ENCODE measurements at regions of chr3 and their contacts with region 1.

Region 1: GRCh38 chr3:129120254-129121004 is 1.2 kb downstream of the RAB43 start:
- DNase-seq: peak; percentile 79 to 97 (median 92)
- ATAC-seq: peak; percentile 51
- H3K4me3 ChIP-seq: peak overlapping the region; percentile 85 to 93
- H3K4me3 Mint-ChIP-seq: peak overlapping the region; percentile 94
- H3K27ac ChIP-seq: peak overlapping the region; percentile 74
- H3K27ac Mint-ChIP-seq: peak overlapping the region; percentile 99
- H3K4me1 ChIP-seq: peaks cover 33% of the 10 kb centered on the region
- H3K4me1 Mint-ChIP-seq: peaks cover 59% of the 10 kb centered on the region
- H3K27me3 ChIP-seq: no peaks in the 10 kb centered on the region
- H3K27me3 Mint-ChIP-seq: no peaks in the 10 kb centered on the region
- CTCF ChIP-seq: peak; percentile 26

Region 2: GRCh38 chr3:129016356-129016719 is 104.1 kb before region 1 on chr3:
- CTCF ChIA-PET with region 1: interaction called, 17 read pairs
- POLR2A ChIA-PET with region 1: interaction called, 55 read pairs
- intact Hi-C with region 1: loop called in 1 of 2 experiments (anchors 1 kb)
- DNase-seq: peak in 8 of 9 experiments; percentile 48 to 91 (median 74)
- ATAC-seq: peak; percentile 86
- H3K4me3 ChIP-seq: peak overlapping the region; percentile 40 to 41
- H3K4me3 Mint-ChIP-seq: peak overlapping the region; percentile 73
- H3K27ac ChIP-seq: peak overlapping the region; percentile 49 to 87
- H3K27ac Mint-ChIP-seq: peak overlapping the region; percentile 92
- H3K4me1 ChIP-seq: peaks cover 41% of the 10 kb centered on the region
- H3K4me1 Mint-ChIP-seq: peaks cover 44% of the 10 kb centered on the region
- H3K27me3 ChIP-seq: no peaks in the 10 kb centered on the region
- H3K27me3 Mint-ChIP-seq: no peaks in the 10 kb centered on the region
- CTCF ChIP-seq: peak; percentile 38

Region 3: DNA sequence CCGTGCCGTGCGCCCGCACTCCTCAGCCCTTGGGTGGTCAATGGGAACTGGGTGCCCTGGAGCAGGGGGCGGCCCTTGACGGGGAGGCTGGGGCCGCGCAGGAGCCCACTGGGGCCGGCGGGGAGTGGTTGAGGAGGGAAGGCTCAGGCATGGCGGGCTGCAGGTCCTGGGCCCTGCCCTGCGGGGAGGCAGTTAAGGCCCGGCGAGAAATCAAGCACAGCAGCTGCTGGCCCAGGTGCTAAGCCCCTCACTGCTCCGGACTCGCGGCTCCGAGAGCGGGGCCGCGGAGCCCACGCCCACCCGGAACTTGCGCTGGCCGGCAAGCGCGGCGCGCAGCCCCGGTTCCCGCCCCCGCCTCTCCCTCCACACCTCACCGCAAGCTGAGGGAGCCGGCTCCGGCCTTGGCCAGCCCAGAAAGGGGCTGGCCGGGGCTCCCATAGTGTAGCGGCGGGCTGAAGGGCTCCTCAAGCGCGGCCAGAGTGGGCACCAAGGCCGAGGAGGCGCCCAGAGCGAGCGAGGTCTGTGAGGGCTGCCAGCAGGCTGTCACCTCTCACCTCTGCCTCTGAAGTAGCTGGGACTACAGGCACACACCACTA is 52.0 kb before region 1 on chr3:
- CTCF ChIA-PET with region 1: interaction called, 4 read pairs
- POLR2A ChIA-PET with region 1: interaction called, 6 read pairs
- intact Hi-C with region 1: loop called in 1 of 2 experiments (anchors 1 kb)
- DNase-seq: peak in 3 of 9 experiments; percentile 25 to 55 (median 38)
- ATAC-seq: peak; percentile 53
- H3K4me3 ChIP-seq: peak overlapping the region; percentile 33 to 37
- H3K4me3 Mint-ChIP-seq: peak overlapping the region; percentile 82
- H3K27ac ChIP-seq: no peak overlapping the region
- H3K27ac Mint-ChIP-seq: no peak overlapping the region
- H3K4me1 ChIP-seq: no peaks in the 10 kb centered on the region
- H3K4me1 Mint-ChIP-seq: peaks cover 28% of the 10 kb centered on the region
- H3K27me3 ChIP-seq: no peaks in the 10 kb centered on the region
- H3K27me3 Mint-ChIP-seq: peaks cover 3% of the 10 kb centered on the region
- CTCF ChIP-seq: no peak

Region 4: GRCh38 chr3:129132097-129132866 is 11.9 kb after region 1 on chr3:
- CTCF ChIA-PET with region 1: interaction called, 3 read pairs
- POLR2A ChIA-PET with region 1: interaction called, 28 read pairs
- intact Hi-C with region 1: no loop called
- DNase-seq: no peak
- ATAC-seq: peak; percentile 62
- H3K4me3 ChIP-seq: no peak overlapping the region
- H3K4me3 Mint-ChIP-seq: no peak overlapping the region
- H3K27ac ChIP-seq: peak overlapping the region; percentile 17 to 33
- H3K27ac Mint-ChIP-seq: peak overlapping the region; percentile 81
- H3K4me1 ChIP-seq: peaks cover 16% of the 10 kb centered on the region
- H3K4me1 Mint-ChIP-seq: peaks cover 16% of the 10 kb centered on the region
- H3K27me3 ChIP-seq: no peaks in the 10 kb centered on the region
- H3K27me3 Mint-ChIP-seq: no peaks in the 10 kb centered on the region
- CTCF ChIP-seq: no peak

Region 5: GRCh38 chr3:129249276-129250065 is 129.0 kb after region 1 on chr3 and contains the start of gene COPG1:
- CTCF ChIA-PET with region 1: interaction called, 7 read pairs
- POLR2A ChIA-PET with region 1: interaction called, 16 read pairs
- intact Hi-C with region 1: loop called (anchors 5 kb)
- DNase-seq: peak; percentile 72 to 95 (median 85)
- ATAC-seq: peak; percentile 83
- H3K4me3 ChIP-seq: peak within 1 kb of the TSS; percentile 80 to 87
- H3K4me3 Mint-ChIP-seq: peak within 1 kb of the TSS; percentile 96
- H3K27ac ChIP-seq: peak within 1 kb of the TSS; percentile 83 to 89
- H3K27ac Mint-ChIP-seq: peak within 1 kb of the TSS; percentile 96
- H3K4me1 ChIP-seq: peaks cover 31% of the 10 kb centered on the region
- H3K4me1 Mint-ChIP-seq: peaks cover 49% of the 10 kb centered on the region
- H3K27me3 ChIP-seq: no peaks in the 10 kb centered on the region
- H3K27me3 Mint-ChIP-seq: no peaks in the 10 kb centered on the region
- CTCF ChIP-seq: no peak
- total RNA-seq, gene COPG1: 77.0 to 93.5 TPM

Region 6: GRCh38 chr3:129289201-129289921 is 168.9 kb after region 1 on chr3:
- CTCF ChIA-PET with region 1: no interaction called
- POLR2A ChIA-PET with region 1: no interaction called
- intact Hi-C with region 1: no loop called
- DNase-seq: no peak
- ATAC-seq: no peak
- H3K4me3 ChIP-seq: no peak overlapping the region
- H3K4me3 Mint-ChIP-seq: no peak overlapping the region
- H3K27ac ChIP-seq: no peak overlapping the region
- H3K27ac Mint-ChIP-seq: peak overlapping the region; percentile 45
- H3K4me1 ChIP-seq: no peaks in the 10 kb centered on the region
- H3K4me1 Mint-ChIP-seq: peaks cover 21% of the 10 kb centered on the region
- H3K27me3 ChIP-seq: no peaks in the 10 kb centered on the region
- H3K27me3 Mint-ChIP-seq: no peaks in the 10 kb centered on the region
- CTCF ChIP-seq: no peak